OCI-LY7 (cell line): ENCODE measurements at regions of chr7 and their contacts with region 1.

Region 1: GRCh38 chr7:38796626-38797501 is 112.1 kb downstream of the VPS41 start:
- DNase-seq: peak; percentile 55
- H3K4me3 ChIP-seq: no peak overlapping the region
- H3K27ac ChIP-seq: no peak overlapping the region
- H3K4me1 ChIP-seq: no peaks in the 10 kb centered on the region
- CTCF ChIP-seq: peak; percentile 96

Region 2: DNA sequence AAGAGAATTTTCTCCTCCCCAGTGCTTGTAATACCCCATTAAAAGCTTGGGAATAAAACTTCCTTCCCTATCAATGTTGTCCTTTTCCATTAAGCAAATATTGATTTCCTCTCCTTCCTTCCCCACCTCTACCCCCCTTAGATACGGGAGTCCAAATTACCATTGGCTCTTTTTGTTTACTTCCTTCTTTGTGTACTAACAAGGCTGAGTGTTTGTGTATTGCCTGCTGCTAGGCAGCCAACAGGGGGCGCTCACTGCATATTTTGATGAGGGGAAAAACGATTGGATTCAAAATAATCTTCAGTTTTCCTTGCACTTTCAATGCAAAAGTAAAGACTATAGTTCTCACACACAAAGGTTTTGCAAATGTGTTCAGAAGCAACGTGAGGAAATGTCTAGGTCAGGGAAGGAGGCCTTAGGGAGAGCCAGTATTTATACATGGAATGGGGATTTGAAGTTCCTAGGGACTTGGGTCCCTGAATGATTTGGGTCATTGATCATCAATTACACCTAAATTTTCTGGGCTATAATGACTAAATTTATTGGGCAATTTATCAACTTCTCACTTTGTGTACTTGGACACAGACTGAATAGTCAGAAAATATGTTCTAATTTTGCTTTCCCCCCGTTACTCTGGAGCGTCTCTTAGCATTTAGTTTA is 135.8 kb after region 1 on chr7:
- CTCF ChIA-PET with region 1: no interaction called
- POLR2A ChIA-PET with region 1: no interaction called
- intact Hi-C with region 1: loop called (anchors 5 kb)
- DNase-seq: peak; percentile 43
- H3K4me3 ChIP-seq: no peak overlapping the region
- H3K27ac ChIP-seq: no peak overlapping the region
- H3K4me1 ChIP-seq: no peaks in the 10 kb centered on the region
- CTCF ChIP-seq: peak; percentile 97

Region 3: DNA sequence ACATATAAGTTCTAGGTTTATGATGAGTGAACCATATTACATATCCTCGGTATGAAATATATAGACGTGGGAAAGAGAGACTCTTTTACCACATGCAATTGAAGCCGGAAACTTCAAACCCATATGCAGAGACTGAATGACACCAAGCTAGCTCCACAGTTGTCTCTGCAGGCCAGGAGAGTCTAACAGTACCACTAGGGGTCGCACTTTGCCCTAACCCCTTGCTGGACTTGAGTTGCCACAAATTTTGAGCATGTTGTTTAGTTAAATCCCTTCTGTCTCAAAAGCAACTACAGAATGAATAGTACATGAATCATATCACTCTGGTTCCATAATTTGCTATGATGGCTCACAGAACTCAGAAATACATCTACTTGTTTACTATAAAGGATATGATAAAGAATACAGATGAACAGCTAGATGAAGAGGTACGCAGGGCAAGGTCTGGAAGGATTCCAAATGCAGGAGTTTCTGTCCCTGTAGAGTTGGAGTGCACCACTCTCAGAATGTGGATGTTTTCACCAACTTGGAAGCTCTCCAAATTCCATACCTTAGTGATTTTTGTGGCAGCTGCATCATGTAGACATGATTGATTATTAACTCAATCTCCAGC is 657.0 kb after region 1 on chr7:
- CTCF ChIA-PET with region 1: no interaction called
- POLR2A ChIA-PET with region 1: no interaction called
- intact Hi-C with region 1: loop called (anchors 5 kb)
- DNase-seq: peak; percentile 62
- H3K4me3 ChIP-seq: no peak overlapping the region
- H3K27ac ChIP-seq: no peak overlapping the region
- H3K4me1 ChIP-seq: no peaks in the 10 kb centered on the region
- CTCF ChIP-seq: peak; percentile 92

Region 4: DNA sequence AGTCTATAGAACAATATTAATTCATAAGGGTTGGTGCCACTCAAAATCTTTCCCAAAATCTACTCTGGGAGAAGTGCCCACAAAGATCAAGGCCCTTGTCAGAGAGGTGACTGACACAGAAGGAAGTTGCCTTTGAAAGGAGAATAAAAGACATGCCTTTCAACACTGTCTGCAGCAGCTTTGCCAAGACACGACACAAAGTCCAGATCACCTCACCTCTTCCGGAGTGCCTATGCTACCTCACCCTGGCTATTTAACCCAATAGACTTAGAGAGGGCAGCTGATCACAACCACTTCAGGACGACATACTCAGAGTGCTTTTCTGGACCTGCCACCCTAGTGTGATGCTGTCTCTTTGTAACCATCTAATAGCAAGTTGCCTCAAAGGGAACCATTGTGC is 720.4 kb after region 1 on chr7:
- CTCF ChIA-PET with region 1: interaction called, 3 read pairs
- POLR2A ChIA-PET with region 1: interaction called, 6 read pairs
- intact Hi-C with region 1: loop called (anchors 1 kb)
- DNase-seq: no peak
- H3K4me3 ChIP-seq: no peak overlapping the region
- H3K27ac ChIP-seq: no peak overlapping the region
- H3K4me1 ChIP-seq: no peaks in the 10 kb centered on the region
- CTCF ChIP-seq: no peak